PC-3 (cell line): ENCODE measurements at regions of chr11 and their contacts with region 1.

Region 1: DNA sequence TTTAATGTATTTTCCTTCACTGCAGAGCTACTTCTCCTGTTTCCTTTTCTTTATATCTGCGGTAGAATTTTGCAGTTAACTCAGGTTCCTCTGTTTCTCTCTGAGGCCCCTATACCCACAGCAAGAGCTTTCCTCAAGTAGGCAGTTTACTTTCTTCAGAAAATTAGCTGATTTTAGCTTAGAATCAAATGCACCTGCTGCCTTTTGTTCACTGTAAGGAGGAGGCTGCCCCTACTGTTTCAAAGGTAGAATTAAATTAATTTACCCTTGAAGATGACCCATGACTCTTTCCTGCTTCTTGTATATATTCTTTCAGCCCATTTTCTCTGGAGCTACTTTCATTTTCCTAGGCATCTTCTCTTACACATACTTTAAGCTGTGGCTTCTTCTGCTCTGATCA is 68.7 kb upstream of the GDPD4 start:
- DNase-seq: no peak
- ATAC-seq: no peak
- H3K4me3 ChIP-seq: no peak overlapping the region
- H3K27ac ChIP-seq: no peak overlapping the region
- H3K4me1 ChIP-seq: peaks cover 26% of the 10 kb centered on the region
- H3K27me3 ChIP-seq: no peaks in the 10 kb centered on the region
- CTCF ChIP-seq: peak; percentile 55

Region 2: GRCh38 chr11:77073328-77074001 is 296.8 kb before region 1 on chr11:
- CTCF ChIA-PET with region 1: no interaction called
- POLR2A ChIA-PET with region 1: no interaction called
- intact Hi-C with region 1: no loop called
- DNase-seq: peak; percentile 75
- ATAC-seq: peak; percentile 92
- H3K4me3 ChIP-seq: no peak overlapping the region
- H3K27ac ChIP-seq: peak overlapping the region; percentile 51
- H3K4me1 ChIP-seq: peaks cover 29% of the 10 kb centered on the region
- H3K27me3 ChIP-seq: no peaks in the 10 kb centered on the region
- CTCF ChIP-seq: peak; percentile 39; the same call in 1 of the 2 replicates

Region 3: GRCh38 chr11:77198440-77198849 is 171.8 kb before region 1 on chr11:
- CTCF ChIA-PET with region 1: interaction called, 7 read pairs
- POLR2A ChIA-PET with region 1: no interaction called
- intact Hi-C with region 1: loop called (anchors 5 kb)
- DNase-seq: peak; percentile 43
- ATAC-seq: peak; percentile 30; the same call in 1 of the 2 replicates
- H3K4me3 ChIP-seq: no peak overlapping the region
- H3K27ac ChIP-seq: no peak overlapping the region
- H3K4me1 ChIP-seq: no peaks in the 10 kb centered on the region
- H3K27me3 ChIP-seq: no peaks in the 10 kb centered on the region
- CTCF ChIP-seq: peak; percentile 64

Region 4: DNA sequence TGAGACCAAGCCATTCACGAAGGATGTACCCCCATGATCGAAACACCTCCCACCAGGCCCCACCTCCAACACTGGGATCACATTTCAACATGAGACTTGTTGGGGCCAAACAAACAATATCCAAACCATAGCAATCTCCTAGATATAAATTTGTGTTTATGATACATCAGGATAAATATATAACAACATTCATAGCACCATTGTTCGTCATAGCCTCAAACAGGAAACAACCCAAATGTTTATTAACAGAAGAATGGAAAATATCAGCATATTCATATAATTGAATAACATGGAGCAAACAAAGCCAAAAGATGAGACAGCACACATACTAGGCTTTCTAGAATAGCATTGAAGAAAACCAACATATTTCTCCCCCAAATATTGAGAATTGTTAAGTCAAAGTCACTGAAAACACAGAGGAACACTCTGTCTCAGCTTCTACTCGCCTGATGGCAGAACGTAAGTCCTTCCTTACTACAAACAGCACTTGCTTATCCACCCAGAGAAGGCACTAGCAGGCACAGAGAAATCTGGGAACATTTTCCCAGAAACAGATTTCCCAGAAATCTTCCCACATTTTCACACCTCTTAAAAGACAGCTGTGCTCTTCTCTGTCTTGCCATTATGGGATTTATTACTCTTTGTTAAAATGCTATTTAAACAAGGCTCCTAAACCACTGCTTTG is 60.7 kb before region 1 on chr11:
- CTCF ChIA-PET with region 1: interaction called, 4 read pairs
- POLR2A ChIA-PET with region 1: no interaction called
- intact Hi-C with region 1: loop called (anchors 5 kb)
- DNase-seq: no peak
- ATAC-seq: no peak
- H3K4me3 ChIP-seq: no peak overlapping the region
- H3K27ac ChIP-seq: no peak overlapping the region
- H3K4me1 ChIP-seq: peaks cover 4% of the 10 kb centered on the region; the same call in 1 of the 2 replicates
- H3K27me3 ChIP-seq: no peaks in the 10 kb centered on the region
- CTCF ChIP-seq: no peak

Region 5: GRCh38 chr11:77411717-77412441 is 41.7 kb after region 1 on chr11:
- CTCF ChIA-PET with region 1: no interaction called
- POLR2A ChIA-PET with region 1: no interaction called
- intact Hi-C with region 1: loop called (anchors 2 kb)
- DNase-seq: peak; percentile 87
- ATAC-seq: peak; percentile 68
- H3K4me3 ChIP-seq: peak overlapping the region; percentile 63
- H3K27ac ChIP-seq: no peak overlapping the region
- H3K4me1 ChIP-seq: peaks cover 33% of the 10 kb centered on the region
- H3K27me3 ChIP-seq: no peaks in the 10 kb centered on the region
- CTCF ChIP-seq: no peak

Region 6: GRCh38 chr11:77467993-77468392 is 97.8 kb after region 1 on chr11:
- CTCF ChIA-PET with region 1: no interaction called
- POLR2A ChIA-PET with region 1: no interaction called
- intact Hi-C with region 1: loop called (anchors 5 kb)
- DNase-seq: no peak
- ATAC-seq: no peak
- H3K4me3 ChIP-seq: no peak overlapping the region
- H3K27ac ChIP-seq: no peak overlapping the region
- H3K4me1 ChIP-seq: peaks cover 34% of the 10 kb centered on the region
- H3K27me3 ChIP-seq: no peaks in the 10 kb centered on the region
- CTCF ChIP-seq: no peak

Region 7: GRCh38 chr11:77517226-77517625 is 147.0 kb after region 1 on chr11:
- CTCF ChIA-PET with region 1: no interaction called
- POLR2A ChIA-PET with region 1: no interaction called
- intact Hi-C with region 1: loop called (anchors 5 kb)
- DNase-seq: peak; percentile 82
- ATAC-seq: peak; percentile 59
- H3K4me3 ChIP-seq: no peak overlapping the region
- H3K27ac ChIP-seq: no peak overlapping the region
- H3K4me1 ChIP-seq: peaks cover 28% of the 10 kb centered on the region
- H3K27me3 ChIP-seq: peaks cover 16% of the 10 kb centered on the region
- CTCF ChIP-seq: no peak

Region 8: DNA sequence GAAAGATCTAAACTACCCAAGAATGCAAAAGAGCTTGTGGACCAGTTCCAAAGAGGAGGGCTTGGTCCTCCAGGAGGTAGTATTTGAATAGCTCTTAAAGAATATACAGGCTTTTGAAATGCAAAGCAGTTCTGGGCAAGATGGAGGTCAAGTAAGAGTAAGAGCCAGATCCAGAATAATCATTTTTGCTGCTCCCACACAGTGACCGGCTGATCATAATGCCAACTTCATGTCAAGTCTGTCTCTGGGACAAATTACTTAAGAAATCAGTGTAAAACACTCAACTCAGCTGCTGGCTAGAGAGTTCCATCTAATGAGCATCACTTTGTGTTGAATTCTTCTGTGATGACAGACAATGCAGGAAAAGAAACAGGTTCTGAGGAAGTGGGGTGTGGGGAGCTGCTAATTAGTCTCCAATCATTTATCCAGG is 1455.4 kb after region 1 on chr11:
- CTCF ChIA-PET with region 1: no interaction called
- POLR2A ChIA-PET with region 1: no interaction called
- intact Hi-C with region 1: no loop called
- DNase-seq: no peak
- ATAC-seq: no peak
- H3K4me3 ChIP-seq: no peak overlapping the region
- H3K27ac ChIP-seq: no peak overlapping the region
- H3K4me1 ChIP-seq: peaks cover 27% of the 10 kb centered on the region
- H3K27me3 ChIP-seq: no peaks in the 10 kb centered on the region
- CTCF ChIP-seq: no peak